Spleen (tissue), 13 donors: ENCODE measurements at regions of chr6 and their contacts with region 1.

Region 1: DNA sequence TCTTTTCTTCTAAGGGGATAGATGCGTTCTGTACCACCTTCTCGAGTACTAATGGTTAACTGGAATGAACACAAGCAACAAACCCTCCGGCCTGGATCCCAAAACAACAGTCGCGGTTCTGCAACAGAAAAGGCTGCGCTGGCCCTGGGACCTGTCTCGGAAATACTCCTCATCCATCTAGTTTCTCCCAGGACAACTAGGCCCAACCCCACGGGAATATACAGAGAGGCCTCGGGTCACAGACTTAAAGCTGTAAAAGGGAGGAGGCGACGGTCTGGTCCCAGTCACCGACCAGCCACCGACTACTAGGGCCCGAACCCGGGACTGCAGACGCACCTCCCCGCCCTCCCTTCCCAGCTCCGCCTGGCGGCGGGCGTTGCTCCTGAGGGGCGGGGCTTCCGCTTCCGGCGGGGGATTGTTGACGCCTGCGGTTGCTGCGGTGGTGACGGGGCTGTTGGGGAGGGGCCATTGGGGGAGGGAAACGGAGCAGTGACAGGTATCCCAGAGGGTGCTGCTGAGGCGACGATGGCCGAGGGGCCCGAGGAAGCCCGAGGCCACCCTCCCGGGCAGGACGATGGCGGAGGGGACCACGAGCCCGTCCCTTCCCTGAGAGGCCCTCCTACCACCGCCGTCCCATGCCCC is at the start of gene FAM8A1:
- DNase-seq: peak; percentile 100
- H3K4me3 ChIP-seq: peak within 1 kb of the TSS; percentile 74 to 96 (median 84)
- H3K27ac ChIP-seq: peak within 1 kb of the TSS; percentile 90 to 99 (median 97)
- H3K4me1 ChIP-seq: peaks cover 6 to 47% (median 29%) of the 10 kb centered on the region in 6 donors
- H3K27me3 ChIP-seq: no peaks in the 10 kb centered on the region
- CTCF ChIP-seq: peak; percentile 46 to 89 (median 75)
- POLR2A ChIP-seq: peak in 2 of 3 donors; percentile 30 to 65
- total RNA-seq, gene FAM8A1: 17.0 to 31.5 (median 22.8) TPM

Region 2: GRCh38 chr6:17706580-17707370 is 106.8 kb after region 1 on chr6 and contains the start of gene NUP153:
- intact Hi-C with region 1: loop called (anchors 10 kb)
- DNase-seq: peak; percentile 100
- H3K4me3 ChIP-seq: peak within 1 kb of the TSS; percentile 76 to 99 (median 88)
- H3K27ac ChIP-seq: peak within 1 kb of the TSS; percentile 90 to 100 (median 100)
- H3K4me1 ChIP-seq: peaks cover 25 to 52% (median 43%) of the 10 kb centered on the region in 6 donors
- H3K27me3 ChIP-seq: no peaks in the 10 kb centered on the region
- CTCF ChIP-seq: peak in 3 of 11 experiments; percentile 18 to 29 (median 28)
- POLR2A ChIP-seq: peak; percentile 74 to 98 (median 91)
- total RNA-seq, gene NUP153: 42.5 to 51.5 (median 48.8) TPM